ENCODE measurements at regions of chr19 and their contacts with region 1.

Region 1: DNA sequence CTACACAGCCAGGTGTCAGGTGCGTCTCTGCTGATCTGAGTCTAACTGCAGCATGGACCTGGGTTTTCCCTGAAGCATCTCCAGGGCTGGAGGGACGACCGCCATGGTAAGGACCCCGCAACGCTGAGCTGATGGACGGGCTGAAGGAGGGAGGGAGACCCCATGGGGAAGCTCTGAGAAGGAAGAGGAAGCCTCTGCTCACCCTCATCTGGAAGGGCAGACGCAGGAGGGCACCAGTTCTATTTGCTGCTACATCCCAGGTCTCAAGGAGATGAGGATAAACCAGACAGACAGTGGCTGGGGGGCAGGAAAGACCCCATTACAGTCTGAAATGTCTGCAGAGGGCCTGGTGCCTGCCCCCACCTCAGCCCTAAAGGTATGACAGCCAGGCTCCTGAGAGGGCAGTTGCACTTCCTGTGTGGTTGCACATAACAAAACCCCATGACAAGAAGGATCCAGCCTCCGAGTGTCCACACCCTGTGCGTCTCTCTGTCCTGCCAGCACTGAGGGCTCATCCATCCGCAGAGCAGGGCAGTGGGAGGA is at the start of gene LILRA2:
- DNase-seq: peak in 2 of 4 donors; percentile 56 to 76
- ATAC-seq: peak; percentile 65
- H3K4me3 ChIP-seq: peak within 1 kb of the TSS in 1 of 2 donors; percentile 45
- H3K27ac ChIP-seq: peak within 1 kb of the TSS; percentile 13 to 94
- H3K4me1 ChIP-seq: peaks cover 0 to 37% of the 10 kb centered on the region in 2 donors
- H3K27me3 ChIP-seq: peaks cover 0 to 55% of the 10 kb centered on the region in 2 donors
- CTCF ChIP-seq: no peak
- polyA plus RNA-seq, gene LILRA2: 0.86 to 1.5 (median 1.0) TPM

Region 2: DNA sequence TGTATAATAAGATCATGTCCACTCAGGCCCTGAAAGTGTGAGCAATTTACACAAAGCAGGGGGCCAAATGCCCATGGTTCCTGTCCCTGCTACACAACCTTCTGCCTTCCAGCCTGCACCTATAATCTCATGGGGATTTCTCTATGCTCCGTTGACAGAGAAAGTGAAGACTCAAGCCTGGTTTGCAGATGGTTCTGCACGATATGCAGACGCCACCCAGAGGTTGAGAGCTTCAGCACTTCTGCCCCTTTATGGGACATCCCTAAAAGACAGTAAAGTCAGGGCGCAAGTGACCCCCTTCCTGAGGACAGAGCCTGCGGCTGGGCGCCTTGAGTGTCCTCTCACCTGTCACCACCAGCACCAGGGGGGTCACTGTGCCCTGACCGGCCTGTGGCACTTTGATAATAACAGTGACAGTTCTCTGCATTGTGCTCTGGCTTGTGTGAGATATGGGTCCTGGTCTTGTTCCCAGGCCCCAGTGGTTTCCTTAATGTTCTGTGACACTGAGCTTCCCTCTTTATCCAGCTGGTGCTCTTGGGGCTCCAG is 275.6 kb before region 1 on chr19:
- intact Hi-C with region 1: loop called in 1 of 2 experiments (anchors 10 kb)
- DNase-seq: no peak
- ATAC-seq: peak; percentile 21
- H3K4me3 ChIP-seq: no peak overlapping the region
- H3K27ac ChIP-seq: no peak overlapping the region
- H3K4me1 ChIP-seq: peaks cover 0 to 39% of the 10 kb centered on the region in 2 donors
- H3K27me3 ChIP-seq: peaks cover 0 to 46% of the 10 kb centered on the region in 2 donors
- CTCF ChIP-seq: no peak